ENCODE measurements at regions of chr12 and their contacts with region 1.

Region 1: DNA sequence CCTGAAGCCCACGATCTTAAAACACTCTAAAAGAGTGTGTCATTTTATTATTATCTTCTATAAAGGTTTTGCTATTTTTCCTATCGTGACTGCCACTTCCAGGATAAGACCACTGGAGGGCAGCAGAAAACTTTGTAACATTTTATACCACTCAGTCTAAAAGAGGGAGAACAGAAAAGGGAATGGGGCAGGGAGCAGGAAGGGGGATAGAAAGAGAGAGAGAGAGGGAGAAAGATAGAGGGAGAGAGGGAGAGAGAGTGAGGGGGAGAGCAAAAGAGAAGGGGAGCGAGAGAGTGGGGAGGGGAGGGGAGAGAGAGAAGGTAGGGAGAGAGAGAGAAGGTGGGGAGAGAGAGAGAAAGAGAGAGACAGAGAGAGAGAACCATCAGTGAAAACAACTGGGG is 2.0 kb upstream of the ART4 start:
- DNase-seq: peak in 7 of 9 donors; percentile 23 to 63 (median 59)
- ATAC-seq: peak; percentile 80
- H3K4me3 ChIP-seq: no peak overlapping the region
- H3K4me3 Mint-ChIP-seq: peak overlapping the region in 7 of 10 donors; percentile 1 to 71 (median 27)
- H3K27ac ChIP-seq: no peak overlapping the region
- H3K27ac Mint-ChIP-seq: peak overlapping the region in 6 of 9 donors; percentile 14 to 68 (median 38)
- H3K4me1 ChIP-seq: no peaks in the 10 kb centered on the region
- H3K4me1 Mint-ChIP-seq: peaks cover 5 to 13% (median 8%) of the 10 kb centered on the region in 7 donors
- H3K27me3 ChIP-seq: no peaks in the 10 kb centered on the region
- H3K27me3 Mint-ChIP-seq: peaks cover 0 to 12% (median under 1%) of the 10 kb centered on the region in 5 donors

Region 2: DNA sequence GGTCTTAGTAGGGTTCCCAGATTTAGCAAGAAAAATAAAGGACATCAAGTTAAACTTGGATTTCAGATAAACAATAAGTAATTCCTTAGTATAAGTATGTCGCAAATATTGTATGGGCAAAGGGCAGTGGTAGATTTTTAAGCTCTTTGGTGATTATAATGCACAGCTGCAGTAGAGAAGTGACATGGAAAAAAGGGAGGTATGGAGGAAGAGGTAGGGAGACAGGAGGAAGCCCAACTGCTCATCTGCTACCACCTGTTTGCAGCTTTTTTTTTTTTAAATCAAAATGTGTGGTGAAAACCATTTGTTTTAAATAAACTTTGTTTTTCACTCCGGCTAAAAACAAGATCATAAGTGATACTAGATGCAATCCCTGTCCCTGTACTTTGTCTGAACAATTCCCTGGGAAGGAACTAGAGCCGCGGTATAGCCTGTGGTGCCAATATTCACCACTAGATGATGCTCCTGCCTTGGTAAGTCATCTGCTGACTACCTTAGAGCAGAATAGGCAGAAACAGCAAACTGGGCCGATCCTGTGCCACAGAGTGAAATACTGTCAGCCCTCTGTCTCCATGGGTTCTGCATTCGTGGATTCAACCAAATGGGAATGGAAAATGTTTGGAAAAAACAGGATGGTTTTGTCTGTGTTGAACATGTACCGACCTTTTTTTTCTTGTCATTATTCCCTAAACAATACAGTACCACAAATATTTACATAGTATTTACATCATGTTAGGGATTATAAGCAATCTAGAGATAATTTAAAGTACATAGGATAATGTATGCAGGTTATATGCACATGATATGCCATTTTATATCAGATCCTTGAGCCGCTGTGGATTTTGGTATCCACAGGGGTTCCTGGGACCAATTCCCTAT is 215.3 kb before region 1 on chr12:
- CTCF ChIA-PET with region 1: no interaction called
- POLR2A ChIA-PET with region 1: no interaction called
- intact Hi-C with region 1: loop called in 1 of 2 experiments (anchors 5 kb)
- DNase-seq: peak; percentile 25 to 71 (median 55)
- ATAC-seq: peak; percentile 99
- H3K4me3 ChIP-seq: no peak overlapping the region
- H3K4me3 Mint-ChIP-seq: no peak overlapping the region
- H3K27ac ChIP-seq: no peak overlapping the region
- H3K27ac Mint-ChIP-seq: no peak overlapping the region
- H3K4me1 ChIP-seq: no peaks in the 10 kb centered on the region
- H3K4me1 Mint-ChIP-seq: no peaks in the 10 kb centered on the region
- H3K27me3 ChIP-seq: no peaks in the 10 kb centered on the region
- H3K27me3 Mint-ChIP-seq: peaks cover 0 to 35% (median 7%) of the 10 kb centered on the region in 5 donors

Region 3: GRCh38 chr12:14691560-14691959 is 153.8 kb before region 1 on chr12:
- CTCF ChIA-PET with region 1: no interaction called
- POLR2A ChIA-PET with region 1: no interaction called
- intact Hi-C with region 1: no loop called
- DNase-seq: no peak
- ATAC-seq: peak; percentile 87
- H3K4me3 ChIP-seq: no peak overlapping the region
- H3K4me3 Mint-ChIP-seq: no peak overlapping the region
- H3K27ac ChIP-seq: no peak overlapping the region
- H3K27ac Mint-ChIP-seq: no peak overlapping the region
- H3K4me1 ChIP-seq: no peaks in the 10 kb centered on the region
- H3K4me1 Mint-ChIP-seq: no peaks in the 10 kb centered on the region
- H3K27me3 ChIP-seq: peaks cover 0 to 2% of the 10 kb centered on the region in 2 donors
- H3K27me3 Mint-ChIP-seq: peaks cover 0 to 15% (median 5%) of the 10 kb centered on the region in 5 donors

Region 4: DNA sequence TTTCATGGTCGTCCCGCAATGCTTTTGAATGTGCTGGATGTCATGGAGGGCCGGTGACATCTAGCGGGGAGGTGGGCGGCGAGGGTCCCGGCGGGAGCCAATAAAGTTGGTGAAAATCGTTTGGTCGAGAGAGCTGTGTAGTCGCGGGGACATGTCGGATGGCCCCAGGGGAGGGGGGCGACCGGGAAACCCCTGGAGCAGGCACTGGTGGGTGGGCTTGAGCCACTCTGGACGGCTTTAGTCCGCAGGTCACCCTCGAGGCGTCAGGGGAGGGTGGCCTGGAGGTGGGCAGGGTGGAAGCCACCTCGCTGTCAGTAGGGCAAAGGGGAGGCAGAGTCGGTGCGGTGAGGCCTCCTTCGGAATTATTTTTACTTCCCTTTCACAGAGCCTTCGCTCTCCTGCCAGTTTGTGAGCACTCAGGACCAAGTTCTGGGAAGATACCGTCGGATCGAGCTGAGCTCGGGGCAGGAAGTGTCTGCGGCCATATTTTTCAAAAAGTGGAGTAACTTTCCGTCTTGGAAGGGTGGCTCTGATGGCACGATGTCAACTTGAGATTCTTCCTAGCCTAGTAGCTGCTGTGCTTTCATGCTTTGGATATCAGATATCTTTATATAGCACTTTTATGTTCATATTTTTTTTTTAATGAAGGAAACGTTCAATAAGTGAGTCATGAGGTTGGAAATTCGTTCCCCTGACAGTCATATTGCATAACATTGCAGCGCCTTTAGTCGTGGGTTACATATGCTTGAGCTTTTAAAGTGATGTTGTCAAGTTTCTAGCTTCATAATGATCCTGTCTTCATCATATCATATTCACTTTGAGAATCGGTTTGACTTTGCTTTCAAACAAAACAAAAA is 70.2 kb before region 1 on chr12:
- CTCF ChIA-PET with region 1: interaction called, 5 read pairs
- POLR2A ChIA-PET with region 1: interaction called, 4 read pairs
- intact Hi-C with region 1: loop called in 1 of 2 experiments (anchors 1 kb)
- DNase-seq: peak; percentile 14 to 54 (median 27)
- ATAC-seq: no peak
- H3K4me3 ChIP-seq: peak overlapping the region; percentile 79
- H3K4me3 Mint-ChIP-seq: peak overlapping the region; percentile 94 to 100 (median 100)
- H3K27ac ChIP-seq: peak overlapping the region; percentile 87
- H3K27ac Mint-ChIP-seq: peak overlapping the region; percentile 96 to 100 (median 99)
- H3K4me1 ChIP-seq: peaks cover 11 to 14% of the 10 kb centered on the region in 2 donors
- H3K4me1 Mint-ChIP-seq: peaks cover 19 to 58% (median 47%) of the 10 kb centered on the region in 7 donors
- H3K27me3 ChIP-seq: no peaks in the 10 kb centered on the region
- H3K27me3 Mint-ChIP-seq: peaks cover 0 to 10% (median 0%) of the 10 kb centered on the region in 5 donors

Region 5: GRCh38 chr12:14920475-14921126 is 75.3 kb after region 1 on chr12:
- CTCF ChIA-PET with region 1: interaction called, 8 read pairs
- POLR2A ChIA-PET with region 1: interaction called, 3 read pairs
- intact Hi-C with region 1: loop called in 1 of 2 experiments (anchors 1 kb)
- DNase-seq: peak in 1 of 9 donors; percentile 29
- ATAC-seq: peak; percentile 80
- H3K4me3 ChIP-seq: no peak overlapping the region
- H3K4me3 Mint-ChIP-seq: peak overlapping the region in 8 of 10 donors; percentile 14 to 59 (median 38)
- H3K27ac ChIP-seq: peak overlapping the region; percentile 1
- H3K27ac Mint-ChIP-seq: peak overlapping the region; percentile 19 to 86 (median 76)
- H3K4me1 ChIP-seq: peaks cover 6 to 19% of the 10 kb centered on the region in 2 donors
- H3K4me1 Mint-ChIP-seq: peaks cover 18 to 38% (median 32%) of the 10 kb centered on the region in 7 donors
- H3K27me3 ChIP-seq: no peaks in the 10 kb centered on the region
- H3K27me3 Mint-ChIP-seq: no peaks in the 10 kb centered on the region

Region 6: DNA sequence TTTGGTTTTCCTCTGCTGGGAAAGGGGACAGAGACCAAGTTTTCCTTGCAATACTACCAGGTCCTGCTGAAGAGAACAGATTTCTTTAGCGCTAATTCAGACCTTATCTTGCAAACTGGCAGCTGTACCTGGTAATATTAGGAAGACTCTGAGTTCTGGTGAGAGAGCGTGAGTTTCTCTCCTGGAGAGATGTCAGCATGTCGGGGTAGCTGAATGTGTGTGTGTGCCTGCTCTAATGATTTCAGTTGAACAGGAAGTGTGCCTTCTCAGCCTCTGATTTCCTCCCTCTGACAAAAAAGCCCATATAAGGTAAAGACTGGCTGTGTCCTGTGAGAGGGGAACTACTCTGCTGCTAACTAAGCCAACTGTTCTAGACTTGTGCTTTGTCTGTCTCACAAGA is 103.3 kb after region 1 on chr12:
- CTCF ChIA-PET with region 1: interaction called, 4 read pairs
- POLR2A ChIA-PET with region 1: interaction called, 3 read pairs
- intact Hi-C with region 1: loop called in 1 of 2 experiments (anchors 1 kb)
- DNase-seq: peak in 8 of 9 donors; percentile 34 to 87 (median 81)
- ATAC-seq: peak; percentile 88
- H3K4me3 ChIP-seq: peak overlapping the region; percentile 47
- H3K4me3 Mint-ChIP-seq: peak overlapping the region; percentile 72 to 97 (median 90)
- H3K27ac ChIP-seq: peak overlapping the region; percentile 96
- H3K27ac Mint-ChIP-seq: peak overlapping the region; percentile 87 to 99 (median 97)
- H3K4me1 ChIP-seq: peaks cover 77 to 79% of the 10 kb centered on the region in 2 donors
- H3K4me1 Mint-ChIP-seq: peaks cover 69 to 95% (median 91%) of the 10 kb centered on the region in 7 donors
- H3K27me3 ChIP-seq: no peaks in the 10 kb centered on the region
- H3K27me3 Mint-ChIP-seq: no peaks in the 10 kb centered on the region

Region 7: GRCh38 chr12:15013634-15014179 is 168.4 kb after region 1 on chr12:
- CTCF ChIA-PET with region 1: no interaction called
- POLR2A ChIA-PET with region 1: no interaction called
- intact Hi-C with region 1: no loop called
- DNase-seq: no peak
- ATAC-seq: no peak
- H3K4me3 ChIP-seq: no peak overlapping the region
- H3K4me3 Mint-ChIP-seq: no peak overlapping the region
- H3K27ac ChIP-seq: no peak overlapping the region
- H3K27ac Mint-ChIP-seq: no peak overlapping the region
- H3K4me1 ChIP-seq: no peaks in the 10 kb centered on the region
- H3K4me1 Mint-ChIP-seq: no peaks in the 10 kb centered on the region
- H3K27me3 ChIP-seq: no peaks in the 10 kb centered on the region
- H3K27me3 Mint-ChIP-seq: peaks cover 0 to 24% (median 14%) of the 10 kb centered on the region in 5 donors

Region 8: DNA sequence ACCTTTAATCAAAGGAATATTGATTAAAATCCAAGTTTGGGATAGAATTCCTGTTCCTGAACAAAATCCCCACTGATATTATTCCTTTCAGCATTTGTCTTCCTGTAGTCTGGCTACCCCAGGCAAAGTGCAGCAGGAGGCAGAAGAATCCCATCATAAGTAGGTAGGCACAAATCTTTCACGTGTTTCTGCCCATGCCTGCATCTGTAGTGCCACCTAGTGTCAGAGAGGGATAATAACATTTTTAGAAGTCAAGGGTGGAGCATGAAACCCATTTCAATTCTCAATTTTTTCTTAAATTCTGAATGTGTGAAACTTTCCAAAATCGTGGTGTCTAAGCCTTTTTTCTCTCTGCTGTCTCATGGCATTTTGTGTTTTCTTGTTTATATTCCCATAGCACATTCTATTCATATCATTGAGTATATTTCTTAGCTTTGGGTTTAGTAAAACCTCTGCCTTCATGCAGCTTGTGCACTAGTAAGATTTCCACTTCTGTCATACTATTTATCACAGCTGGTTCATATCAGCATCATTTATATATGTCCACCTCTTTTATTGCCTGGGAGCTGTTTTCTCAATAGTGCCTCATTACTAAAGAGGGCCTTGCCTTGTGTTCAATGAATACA is 423.7 kb after region 1 on chr12:
- CTCF ChIA-PET with region 1: interaction called, 3 read pairs
- POLR2A ChIA-PET with region 1: no interaction called
- intact Hi-C with region 1: loop called (anchors 1 kb)
- DNase-seq: peak in 7 of 9 donors; percentile 28 to 65 (median 56)
- ATAC-seq: peak; percentile 79
- H3K4me3 ChIP-seq: no peak overlapping the region
- H3K4me3 Mint-ChIP-seq: no peak overlapping the region
- H3K27ac ChIP-seq: no peak overlapping the region
- H3K27ac Mint-ChIP-seq: no peak overlapping the region
- H3K4me1 ChIP-seq: no peaks in the 10 kb centered on the region
- H3K4me1 Mint-ChIP-seq: no peaks in the 10 kb centered on the region
- H3K27me3 ChIP-seq: no peaks in the 10 kb centered on the region
- H3K27me3 Mint-ChIP-seq: peaks cover 2 to 11% (median 5%) of the 10 kb centered on the region in 5 donors

Measured in naive thymus-derived CD4-positive, alpha-beta T cell (primary cell).